ENCODE measurements at regions of chr22 and their contacts with region 1.

Region 1: GRCh38 chr22:28829358-28830181 is 29.2 kb upstream of the XBP1 start:
- DNase-seq: peak; percentile 41 to 64
- ATAC-seq: peak; percentile 80 to 91; a peak in 5 of 6 replicates
- H3K4me3 ChIP-seq: no peak overlapping the region
- H3K27ac ChIP-seq: peak overlapping the region in 1 of 2 experiments; percentile 40; a peak in 2 of 6 replicates
- H3K4me1 ChIP-seq: no peaks in the 10 kb centered on the region
- CTCF ChIP-seq: peak; percentile 90
- EP300 ChIP-seq: no peak
- POLR2A ChIP-seq: no peak
- RAD21 ChIP-seq: peak; percentile 93 to 95

Region 2: DNA sequence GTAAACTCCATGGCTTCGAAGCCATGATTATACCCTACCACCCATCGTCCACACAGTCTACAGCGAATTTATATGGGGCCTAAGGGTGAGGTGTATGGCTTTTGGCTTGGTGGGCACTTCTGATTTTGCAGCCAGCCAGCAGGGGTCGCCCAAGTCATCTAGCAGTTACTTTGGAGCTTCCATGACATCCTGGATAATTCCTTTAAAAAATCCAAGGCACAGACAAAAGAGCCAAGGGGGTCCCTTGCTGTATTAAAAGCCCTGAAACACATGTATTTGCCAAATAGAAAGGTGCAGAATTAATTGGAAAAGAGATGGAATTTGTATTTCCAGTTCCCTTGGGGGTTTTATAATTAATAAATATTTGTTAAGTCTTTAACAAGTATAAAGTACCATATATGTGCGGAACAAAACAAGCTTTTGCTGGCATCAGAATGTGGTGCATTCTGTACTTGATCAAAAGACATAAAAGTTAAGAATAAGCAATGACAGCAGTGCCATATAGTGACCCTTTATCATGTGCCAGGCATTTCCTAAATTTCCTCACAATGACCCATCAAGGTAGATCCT is 777.7 kb before region 1 on chr22:
- CTCF ChIA-PET with region 1: interaction called, 11 read pairs
- POLR2A ChIA-PET with region 1: no interaction called
- DNase-seq: peak; percentile 21 to 53
- ATAC-seq: peak in 1 of 2 experiments; percentile 77; a peak in 3 of 6 replicates
- H3K4me3 ChIP-seq: no peak overlapping the region
- H3K27ac ChIP-seq: no peak overlapping the region
- H3K4me1 ChIP-seq: no peaks in the 10 kb centered on the region
- CTCF ChIP-seq: peak; percentile 75
- EP300 ChIP-seq: no peak
- POLR2A ChIP-seq: no peak
- RAD21 ChIP-seq: peak; percentile 81 to 84

Region 3: GRCh38 chr22:28600546-28601143 is 228.9 kb before region 1 on chr22:
- CTCF ChIA-PET with region 1: interaction called, 79 read pairs
- POLR2A ChIA-PET with region 1: no interaction called
- DNase-seq: peak; percentile 11 to 48
- ATAC-seq: peak in 1 of 2 experiments; percentile 50; a peak in 3 of 6 replicates
- H3K4me3 ChIP-seq: no peak overlapping the region
- H3K27ac ChIP-seq: no peak overlapping the region
- H3K4me1 ChIP-seq: peaks cover 18% of the 10 kb centered on the region
- CTCF ChIP-seq: peak; percentile 61
- EP300 ChIP-seq: no peak
- POLR2A ChIP-seq: no peak
- RAD21 ChIP-seq: peak; percentile 75 to 82

Region 4: DNA sequence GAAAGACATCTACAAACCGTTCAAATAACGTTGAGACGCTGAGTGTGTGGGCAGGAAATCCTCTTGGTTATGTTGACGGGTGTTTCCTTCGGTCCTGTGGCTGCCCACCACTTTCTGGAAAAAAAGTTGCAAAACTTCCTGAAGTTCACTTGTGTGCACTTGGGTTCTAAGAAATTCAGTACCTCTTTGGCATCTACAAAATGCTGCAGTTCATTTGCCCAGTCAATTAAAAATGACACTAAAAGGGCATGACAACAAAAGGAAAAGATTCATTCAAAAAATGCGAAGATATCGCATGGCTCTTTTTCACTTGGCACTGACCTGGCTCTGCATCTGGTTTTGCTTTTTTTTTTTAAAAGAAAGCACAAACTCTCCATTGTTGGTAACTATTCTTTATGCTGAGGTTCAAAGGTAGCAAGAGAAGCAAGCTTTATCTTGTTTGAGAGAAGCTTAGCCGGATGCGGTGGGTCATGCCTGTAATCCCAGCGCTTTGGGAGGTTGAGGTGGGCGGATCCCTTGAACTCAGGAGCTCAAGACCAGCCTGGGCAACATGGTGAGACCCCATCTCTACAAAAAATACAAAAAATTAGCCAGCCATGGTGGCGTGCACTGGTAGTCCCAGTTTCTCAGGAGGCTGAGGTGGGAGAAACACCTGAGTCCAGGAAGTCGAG is 18.6 kb before region 1 on chr22:
- CTCF ChIA-PET with region 1: interaction called, 19 read pairs
- POLR2A ChIA-PET with region 1: no interaction called
- DNase-seq: no peak
- ATAC-seq: no peak
- H3K4me3 ChIP-seq: no peak overlapping the region
- H3K27ac ChIP-seq: no peak overlapping the region
- H3K4me1 ChIP-seq: peaks cover 34% of the 10 kb centered on the region; the same call in 2 of the 3 replicates
- CTCF ChIP-seq: no peak
- EP300 ChIP-seq: no peak
- POLR2A ChIP-seq: no peak
- RAD21 ChIP-seq: no peak

Region 5: DNA sequence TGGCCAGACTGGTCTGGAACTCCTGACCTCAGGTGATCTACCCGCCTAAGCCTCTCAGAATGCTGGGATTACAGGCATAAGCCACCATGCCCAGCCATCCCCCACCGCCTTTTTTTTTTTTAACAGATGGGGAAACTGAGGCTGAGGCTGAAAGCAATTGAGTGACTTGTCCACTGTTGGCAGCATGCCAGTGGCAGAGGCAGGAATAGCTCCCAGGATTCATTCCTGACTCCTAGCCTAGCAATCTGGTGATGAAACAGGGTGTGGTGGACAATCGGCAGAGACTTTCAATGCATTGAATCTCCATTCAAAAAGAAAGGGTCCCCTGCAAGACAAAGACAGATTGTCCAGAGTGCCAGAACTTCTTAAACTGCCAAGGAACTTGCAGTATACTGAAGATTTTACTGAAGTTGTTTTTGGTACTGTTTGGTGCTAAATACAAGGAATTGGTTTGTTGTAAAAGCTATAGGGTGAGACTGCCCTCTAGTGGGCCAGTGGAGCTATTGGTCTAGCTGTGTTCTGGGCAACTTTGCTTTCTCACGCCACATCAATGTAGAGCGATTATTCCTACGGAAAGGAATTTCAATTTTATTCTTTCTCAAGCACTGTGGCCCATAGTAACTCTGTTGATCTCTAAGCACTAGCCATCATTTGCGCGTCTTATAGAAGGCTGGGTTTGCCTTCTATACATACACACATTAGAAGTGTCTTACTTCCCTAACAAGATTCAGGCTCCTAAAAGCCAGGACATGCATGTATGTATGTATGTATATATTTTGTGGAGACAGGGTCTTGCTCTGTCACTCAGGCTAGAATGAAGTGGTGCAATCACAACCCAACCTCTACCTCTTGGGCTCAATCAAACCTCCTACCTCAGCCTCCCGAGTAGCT is 211.1 kb after region 1 on chr22:
- CTCF ChIA-PET with region 1: interaction called, 11 read pairs
- POLR2A ChIA-PET with region 1: no interaction called
- DNase-seq: peak in 1 of 2 experiments; percentile 77
- ATAC-seq: peak; percentile 90 to 92
- H3K4me3 ChIP-seq: no peak overlapping the region
- H3K27ac ChIP-seq: peak overlapping the region; percentile 70 to 87
- H3K4me1 ChIP-seq: peaks cover 63% of the 10 kb centered on the region
- CTCF ChIP-seq: peak; percentile 90
- EP300 ChIP-seq: no peak
- POLR2A ChIP-seq: no peak
- RAD21 ChIP-seq: peak; percentile 91 to 95